CD8-positive, alpha-beta memory T cell (primary cell): ENCODE measurements at regions of chr3 and their contacts with region 1.

Region 1: GRCh38 chr3:52339612-52340011 is 23.5 kb downstream of the DNAH1 start:
- DNase-seq: peak; percentile 10 to 72 (median 60)
- H3K4me3 ChIP-seq: no peak overlapping the region
- H3K4me3 Mint-ChIP-seq: no peak overlapping the region
- H3K27ac ChIP-seq: no peak overlapping the region
- H3K27ac Mint-ChIP-seq: peak overlapping the region in 5 of 8 donors; percentile 1 to 62 (median 17)
- H3K4me1 ChIP-seq: no peaks in the 10 kb centered on the region
- H3K4me1 Mint-ChIP-seq: peaks cover 5 to 7% (median 6%) of the 10 kb centered on the region in 3 donors
- H3K27me3 ChIP-seq: no peaks in the 10 kb centered on the region
- H3K27me3 Mint-ChIP-seq: no peaks in the 10 kb centered on the region

Region 2: DNA sequence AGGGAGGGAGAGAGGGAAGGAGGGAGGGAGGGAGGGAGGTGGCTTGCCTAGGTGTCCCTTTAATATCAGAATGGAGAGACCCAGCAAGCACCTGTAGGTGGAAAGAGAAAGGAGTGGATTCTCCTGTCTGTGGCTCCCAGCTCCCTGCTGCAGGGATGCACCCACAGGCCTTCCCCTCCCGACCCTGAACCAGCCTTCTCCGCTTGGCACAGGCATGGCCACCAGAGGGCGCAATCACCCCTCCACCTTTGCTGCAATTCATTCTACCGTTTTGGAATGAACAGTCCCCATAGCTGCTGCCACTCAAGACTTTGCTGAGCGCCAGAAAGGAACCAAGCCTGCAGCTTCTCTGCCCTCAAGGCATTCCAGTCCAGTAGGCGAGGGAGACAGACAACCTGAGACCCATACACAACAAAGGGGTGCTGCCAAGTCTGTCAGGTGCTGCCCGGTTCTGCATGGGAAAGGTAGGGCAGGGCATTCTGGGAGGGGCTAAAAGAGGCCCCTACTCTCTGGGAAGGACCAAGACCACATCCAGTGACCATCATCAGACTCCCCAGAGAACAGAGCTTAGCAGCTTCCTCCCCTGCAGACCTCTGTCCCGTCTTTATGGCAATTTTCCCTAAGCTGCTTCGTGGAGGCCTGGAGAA is 119.1 kb before region 1 on chr3:
- CTCF ChIA-PET with region 1: interaction called, 111 read pairs
- POLR2A ChIA-PET with region 1: interaction called, 7 read pairs
- DNase-seq: peak; percentile 77 to 89 (median 82)
- H3K4me3 ChIP-seq: no peak overlapping the region
- H3K4me3 Mint-ChIP-seq: peak overlapping the region; percentile 46 to 81 (median 69)
- H3K27ac ChIP-seq: no peak overlapping the region
- H3K27ac Mint-ChIP-seq: peak overlapping the region in 7 of 8 donors; percentile 26 to 91 (median 85)
- H3K4me1 ChIP-seq: peaks cover 91% of the 10 kb centered on the region
- H3K4me1 Mint-ChIP-seq: peaks cover 79 to 93% (median 81%) of the 10 kb centered on the region in 3 donors
- H3K27me3 ChIP-seq: no peaks in the 10 kb centered on the region
- H3K27me3 Mint-ChIP-seq: no peaks in the 10 kb centered on the region

Region 3: GRCh38 chr3:52238761-52239701 is 100.6 kb before region 1 on chr3 and contains the start of gene TWF2:
- CTCF ChIA-PET with region 1: interaction called, 13 read pairs
- POLR2A ChIA-PET with region 1: no interaction called
- DNase-seq: peak; percentile 82 to 94 (median 88)
- H3K4me3 ChIP-seq: peak within 1 kb of the TSS; percentile 96
- H3K4me3 Mint-ChIP-seq: peak within 1 kb of the TSS; percentile 96 to 99 (median 98)
- H3K27ac ChIP-seq: peak within 1 kb of the TSS; percentile 83
- H3K27ac Mint-ChIP-seq: peak within 1 kb of the TSS; percentile 88 to 99 (median 96)
- H3K4me1 ChIP-seq: peaks cover 76% of the 10 kb centered on the region
- H3K4me1 Mint-ChIP-seq: peaks cover 72 to 88% (median 83%) of the 10 kb centered on the region in 3 donors
- H3K27me3 ChIP-seq: no peaks in the 10 kb centered on the region
- H3K27me3 Mint-ChIP-seq: peaks cover 0 to 2% of the 10 kb centered on the region in 2 donors
- total RNA-seq, gene TWF2: 98.2 to 101 TPM

Region 4: DNA sequence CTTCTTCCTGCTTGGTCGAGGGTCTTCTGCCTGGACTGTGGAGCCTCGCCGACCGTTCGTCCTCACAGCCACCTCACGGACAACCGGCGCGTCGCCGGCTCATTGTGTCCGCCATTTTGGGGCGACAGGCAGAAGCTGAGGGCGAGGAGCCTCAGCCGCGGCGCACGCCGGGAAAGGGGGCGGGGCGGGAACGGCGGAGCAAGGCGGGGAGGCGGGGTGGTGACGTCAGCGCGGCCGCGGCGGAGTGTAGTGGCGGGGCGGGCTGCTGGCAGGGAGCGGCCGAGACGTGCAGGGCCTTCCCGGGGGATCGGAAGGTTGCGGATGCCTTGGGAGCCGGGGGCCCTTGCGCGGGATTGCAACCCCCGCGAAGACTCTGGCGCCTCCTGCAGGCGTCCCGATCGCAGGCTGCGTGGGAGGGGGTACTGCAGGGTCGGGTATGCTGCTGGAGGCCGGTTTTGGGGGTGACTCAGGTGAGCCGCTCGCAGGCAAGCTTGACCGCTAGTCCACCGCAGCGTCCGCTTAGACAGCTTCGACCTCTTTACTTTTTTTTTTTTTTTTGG is 61.0 kb before region 1 on chr3 and contains the start of gene WDR82:
- CTCF ChIA-PET with region 1: interaction called, 12 read pairs
- POLR2A ChIA-PET with region 1: interaction called, 4 read pairs
- DNase-seq: peak; percentile 95 to 99 (median 96)
- H3K4me3 ChIP-seq: peak within 1 kb of the TSS; percentile 79
- H3K4me3 Mint-ChIP-seq: peak within 1 kb of the TSS; percentile 93 to 100 (median 97)
- H3K27ac ChIP-seq: peak within 1 kb of the TSS; percentile 84
- H3K27ac Mint-ChIP-seq: peak within 1 kb of the TSS; percentile 90 to 100 (median 99)
- H3K4me1 ChIP-seq: peaks cover 55% of the 10 kb centered on the region
- H3K4me1 Mint-ChIP-seq: peaks cover 58 to 80% (median 69%) of the 10 kb centered on the region in 3 donors
- H3K27me3 ChIP-seq: no peaks in the 10 kb centered on the region
- H3K27me3 Mint-ChIP-seq: peaks cover 0 to 2% of the 10 kb centered on the region in 2 donors
- total RNA-seq, gene WDR82: 133 to 140 TPM

Region 5: DNA sequence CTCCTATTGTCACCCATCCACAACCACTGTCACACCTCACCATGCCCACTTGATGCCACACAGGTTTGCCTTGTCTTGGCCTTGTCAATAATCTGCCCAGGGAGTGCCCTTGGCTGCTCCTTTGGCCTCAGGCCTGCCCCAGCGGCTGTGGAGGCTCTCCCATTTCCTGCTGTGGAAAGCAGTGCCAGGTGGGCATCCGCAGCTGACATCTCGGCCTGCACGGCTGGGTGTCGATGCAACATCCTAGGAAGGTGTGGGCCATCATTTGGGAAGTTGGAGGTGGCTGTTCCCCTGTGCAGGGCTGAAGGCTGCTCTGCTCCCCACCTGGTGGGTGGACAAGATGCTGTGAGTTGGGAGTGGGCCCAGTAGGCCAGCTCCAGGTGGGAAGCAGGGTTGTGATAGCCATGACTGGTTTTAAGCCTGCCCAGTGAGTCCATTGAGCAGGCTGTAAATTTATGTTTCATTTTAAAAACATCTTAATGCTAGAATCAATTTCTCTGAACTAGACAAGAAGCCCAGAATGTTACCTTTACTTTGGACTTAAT is 11.0 kb before region 1 on chr3:
- CTCF ChIA-PET with region 1: interaction called, 10 read pairs
- POLR2A ChIA-PET with region 1: no interaction called
- DNase-seq: peak in 1 of 5 donors; percentile 34
- H3K4me3 ChIP-seq: no peak overlapping the region
- H3K4me3 Mint-ChIP-seq: peak overlapping the region in 1 of 7 donors; percentile 0
- H3K27ac ChIP-seq: no peak overlapping the region
- H3K27ac Mint-ChIP-seq: peak overlapping the region in 3 of 8 donors; percentile 6 to 23 (median 20)
- H3K4me1 ChIP-seq: no peaks in the 10 kb centered on the region
- H3K4me1 Mint-ChIP-seq: peaks cover 0 to 1% (median 0%) of the 10 kb centered on the region in 3 donors
- H3K27me3 ChIP-seq: no peaks in the 10 kb centered on the region
- H3K27me3 Mint-ChIP-seq: no peaks in the 10 kb centered on the region